ENCODE measurements at regions of chr9 and their contacts with region 1.

Region 1: GRCh38 chr9:16191691-16192402 is 639.0 kb downstream of the CCDC171 start:
- DNase-seq: peak; percentile 80 to 88
- ATAC-seq: peak; percentile 91 to 99 (median 94)
- H3K4me3 ChIP-seq: no peak overlapping the region
- H3K27ac ChIP-seq: no peak overlapping the region
- H3K4me1 ChIP-seq: no peaks in the 10 kb centered on the region
- H3K27me3 ChIP-seq: no peaks in the 10 kb centered on the region
- CTCF ChIP-seq: peak; percentile 70

Region 2: GRCh38 chr9:15813076-15813475 is 378.8 kb before region 1 on chr9:
- intact Hi-C with region 1: no loop called
- DNase-seq: no peak
- ATAC-seq: no peak
- H3K4me3 ChIP-seq: no peak overlapping the region
- H3K27ac ChIP-seq: no peak overlapping the region
- H3K4me1 ChIP-seq: no peaks in the 10 kb centered on the region
- H3K27me3 ChIP-seq: no peaks in the 10 kb centered on the region
- CTCF ChIP-seq: no peak

Region 3: DNA sequence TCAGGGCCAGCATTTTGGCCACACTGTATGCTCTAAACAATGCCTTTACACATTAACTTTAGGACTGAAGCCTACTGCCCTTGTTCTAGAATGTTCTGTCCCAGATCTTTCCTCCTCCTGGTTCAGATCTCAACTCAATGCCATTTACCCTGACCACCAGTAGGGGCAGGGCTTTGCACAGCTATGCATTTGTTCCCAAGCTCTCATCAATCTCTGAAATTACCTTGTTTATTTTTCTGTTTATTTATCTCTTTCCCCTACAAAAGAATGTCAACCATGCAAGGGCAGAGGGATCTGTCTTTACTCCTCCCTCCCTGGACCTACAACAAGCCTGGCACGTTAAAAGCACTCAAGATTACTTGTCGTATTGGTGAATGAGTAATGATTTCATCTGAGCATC is 65.8 kb after region 1 on chr9:
- intact Hi-C with region 1: loop called in 1 of 2 experiments (anchors 10 kb)
- DNase-seq: no peak
- ATAC-seq: no peak
- H3K4me3 ChIP-seq: no peak overlapping the region
- H3K27ac ChIP-seq: no peak overlapping the region
- H3K4me1 ChIP-seq: no peaks in the 10 kb centered on the region
- H3K27me3 ChIP-seq: no peaks in the 10 kb centered on the region
- CTCF ChIP-seq: peak; percentile 30